ENCODE measurements at regions of chr17 and their contacts with region 1.

Region 1: GRCh38 chr17:56592487-56593085 is 913 bp upstream of the NOG start:
- DNase-seq: peak; percentile 83
- ATAC-seq: peak; percentile 89
- H3K4me3 ChIP-seq: peak overlapping the region; percentile 58
- H3K27ac ChIP-seq: no peak overlapping the region
- H3K4me1 ChIP-seq: peaks cover 23% of the 10 kb centered on the region
- H3K27me3 ChIP-seq: peaks cover 51% of the 10 kb centered on the region
- CTCF ChIP-seq: peak; percentile 94

Region 2: GRCh38 chr17:56715613-56716357 is 123.2 kb after region 1 on chr17:
- intact Hi-C with region 1: loop called (anchors 10 kb)
- DNase-seq: peak; percentile 76
- ATAC-seq: peak; percentile 96
- H3K4me3 ChIP-seq: no peak overlapping the region
- H3K27ac ChIP-seq: no peak overlapping the region
- H3K4me1 ChIP-seq: no peaks in the 10 kb centered on the region
- H3K27me3 ChIP-seq: no peaks in the 10 kb centered on the region
- CTCF ChIP-seq: peak; percentile 85

Region 3: GRCh38 chr17:56913864-56914640 is 321.5 kb after region 1 on chr17 and contains the start of gene TRIM25:
- intact Hi-C with region 1: no loop called
- DNase-seq: peak; percentile 98
- ATAC-seq: peak; percentile 92
- H3K4me3 ChIP-seq: peak within 1 kb of the TSS; percentile 96
- H3K27ac ChIP-seq: peak within 1 kb of the TSS; percentile 97
- H3K4me1 ChIP-seq: peaks cover 45% of the 10 kb centered on the region
- H3K27me3 ChIP-seq: no peaks in the 10 kb centered on the region
- CTCF ChIP-seq: no peak
- total RNA-seq, gene TRIM25: 89.3 TPM

Measured in upper lobe of right lung (tissue), 1 donor.